CD8-positive, alpha-beta T cell (primary cell): ENCODE measurements at regions of chr6 and their contacts with region 1.

Region 1: GRCh38 chr6:27312146-27312949 is at the start of gene POM121L2:
- DNase-seq: peak; percentile 28 to 79 (median 52)
- ATAC-seq: peak; percentile 65
- H3K4me3 ChIP-seq: peak within 1 kb of the TSS; percentile 71 to 80
- H3K4me3 Mint-ChIP-seq: peak within 1 kb of the TSS; percentile 81
- H3K27ac ChIP-seq: no peak within 1 kb of the TSS
- H3K27ac Mint-ChIP-seq: no peak within 1 kb of the TSS
- H3K4me1 ChIP-seq: peaks cover 12% of the 10 kb centered on the region
- H3K4me1 Mint-ChIP-seq: peaks cover 10% of the 10 kb centered on the region
- H3K27me3 ChIP-seq: peaks cover 10 to 12% of the 10 kb centered on the region in 2 experiments
- H3K27me3 Mint-ChIP-seq: peaks cover 72% of the 10 kb centered on the region
- CTCF ChIP-seq: peak; percentile 79
- total RNA-seq, gene POM121L2: not detected

Region 2: DNA sequence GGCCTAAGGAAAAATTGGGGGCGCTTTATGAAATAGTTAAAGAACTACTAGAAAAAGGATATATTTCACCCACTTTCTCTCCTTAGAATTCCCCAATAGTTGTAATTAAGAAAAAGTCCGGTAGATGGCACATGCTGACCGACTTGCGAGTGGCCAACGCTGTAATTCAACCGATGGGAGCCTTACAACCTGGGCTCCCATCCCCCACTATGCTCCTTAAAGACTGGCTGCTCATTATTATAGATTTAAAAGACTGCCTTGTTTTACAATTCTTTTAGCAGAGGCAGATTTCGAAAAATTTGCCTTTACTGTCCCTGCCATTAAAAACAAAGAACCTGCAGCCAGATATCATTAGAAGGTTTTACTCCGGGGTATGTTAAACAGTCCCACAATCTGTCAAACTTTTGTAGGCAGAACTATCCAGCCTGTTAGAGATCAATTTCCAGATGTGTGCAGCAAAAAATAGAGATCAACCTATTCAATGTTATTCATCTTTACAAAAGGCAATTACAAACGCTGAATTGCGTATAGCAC is 123.4 kb before region 1 on chr6:
- CTCF ChIA-PET with region 1: interaction called, 4 read pairs
- POLR2A ChIA-PET with region 1: no interaction called
- intact Hi-C with region 1: loop called (anchors 2 to 5 kb)
- DNase-seq: peak in 8 of 9 experiments; percentile 24 to 86 (median 50)
- ATAC-seq: peak; percentile 77
- H3K4me3 ChIP-seq: peak overlapping the region; percentile 58 to 62
- H3K4me3 Mint-ChIP-seq: peak overlapping the region; percentile 87
- H3K27ac ChIP-seq: peak overlapping the region in 1 of 2 experiments; percentile 33
- H3K27ac Mint-ChIP-seq: no peak overlapping the region
- H3K4me1 ChIP-seq: peaks cover 4% of the 10 kb centered on the region
- H3K4me1 Mint-ChIP-seq: peaks cover 10% of the 10 kb centered on the region
- H3K27me3 ChIP-seq: no peaks in the 10 kb centered on the region
- H3K27me3 Mint-ChIP-seq: no peaks in the 10 kb centered on the region
- CTCF ChIP-seq: peak; percentile 66

Region 3: DNA sequence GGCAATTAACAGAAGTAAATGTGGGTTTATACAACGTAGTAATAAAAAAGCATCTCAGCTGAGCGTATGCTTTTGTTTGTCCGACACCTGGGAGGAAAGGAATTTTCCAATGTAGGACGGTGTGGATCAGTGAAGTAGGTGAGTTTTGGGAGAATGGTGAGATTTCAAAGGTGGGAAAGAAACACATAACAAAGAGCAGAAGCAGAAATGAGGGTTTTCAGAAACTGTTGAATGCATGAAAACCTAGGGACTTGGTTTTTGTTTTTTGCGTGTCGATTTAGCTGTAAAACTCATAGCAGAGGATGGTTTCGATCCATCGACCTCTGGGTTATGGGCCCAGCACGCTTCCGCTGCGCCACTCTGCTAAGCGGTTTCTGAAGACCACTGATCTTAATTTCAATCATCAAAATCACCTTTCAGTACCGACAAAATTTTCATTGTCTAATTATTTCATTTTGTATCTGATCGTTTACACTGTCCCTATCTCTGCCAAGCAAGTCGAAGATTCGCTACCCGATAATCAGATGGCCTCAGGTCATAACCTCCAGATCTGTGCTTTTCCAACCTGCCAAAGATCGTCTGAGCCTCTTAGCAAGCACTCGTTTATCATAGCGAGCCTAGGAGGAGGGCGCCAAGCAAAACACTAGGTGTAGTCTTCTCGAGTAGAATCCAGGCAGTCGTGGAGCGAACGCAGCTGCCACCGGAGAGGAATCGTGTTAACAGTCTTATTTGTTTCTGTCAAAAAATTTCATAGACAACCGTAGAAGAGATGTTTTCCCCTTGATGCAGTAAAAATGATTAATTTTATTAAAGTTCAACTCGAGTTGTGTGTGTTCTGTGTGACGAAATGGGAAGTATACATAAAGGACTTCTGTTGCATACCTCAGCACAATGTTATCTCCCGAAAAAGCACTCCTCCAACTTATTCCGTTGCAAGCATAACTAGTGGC is 20.6 kb after region 1 on chr6:
- CTCF ChIA-PET with region 1: interaction called, 16 read pairs
- POLR2A ChIA-PET with region 1: no interaction called
- intact Hi-C with region 1: no loop called
- DNase-seq: peak in 8 of 9 experiments; percentile 12 to 78 (median 60)
- ATAC-seq: peak; percentile 86
- H3K4me3 ChIP-seq: peak overlapping the region; percentile 53
- H3K4me3 Mint-ChIP-seq: peak overlapping the region; percentile 87
- H3K27ac ChIP-seq: no peak overlapping the region
- H3K27ac Mint-ChIP-seq: peak overlapping the region; percentile 82
- H3K4me1 ChIP-seq: no peaks in the 10 kb centered on the region
- H3K4me1 Mint-ChIP-seq: peaks cover 15% of the 10 kb centered on the region
- H3K27me3 ChIP-seq: peaks cover 0 to 4% of the 10 kb centered on the region in 2 experiments
- H3K27me3 Mint-ChIP-seq: peaks cover 21% of the 10 kb centered on the region
- CTCF ChIP-seq: no peak

Region 4: DNA sequence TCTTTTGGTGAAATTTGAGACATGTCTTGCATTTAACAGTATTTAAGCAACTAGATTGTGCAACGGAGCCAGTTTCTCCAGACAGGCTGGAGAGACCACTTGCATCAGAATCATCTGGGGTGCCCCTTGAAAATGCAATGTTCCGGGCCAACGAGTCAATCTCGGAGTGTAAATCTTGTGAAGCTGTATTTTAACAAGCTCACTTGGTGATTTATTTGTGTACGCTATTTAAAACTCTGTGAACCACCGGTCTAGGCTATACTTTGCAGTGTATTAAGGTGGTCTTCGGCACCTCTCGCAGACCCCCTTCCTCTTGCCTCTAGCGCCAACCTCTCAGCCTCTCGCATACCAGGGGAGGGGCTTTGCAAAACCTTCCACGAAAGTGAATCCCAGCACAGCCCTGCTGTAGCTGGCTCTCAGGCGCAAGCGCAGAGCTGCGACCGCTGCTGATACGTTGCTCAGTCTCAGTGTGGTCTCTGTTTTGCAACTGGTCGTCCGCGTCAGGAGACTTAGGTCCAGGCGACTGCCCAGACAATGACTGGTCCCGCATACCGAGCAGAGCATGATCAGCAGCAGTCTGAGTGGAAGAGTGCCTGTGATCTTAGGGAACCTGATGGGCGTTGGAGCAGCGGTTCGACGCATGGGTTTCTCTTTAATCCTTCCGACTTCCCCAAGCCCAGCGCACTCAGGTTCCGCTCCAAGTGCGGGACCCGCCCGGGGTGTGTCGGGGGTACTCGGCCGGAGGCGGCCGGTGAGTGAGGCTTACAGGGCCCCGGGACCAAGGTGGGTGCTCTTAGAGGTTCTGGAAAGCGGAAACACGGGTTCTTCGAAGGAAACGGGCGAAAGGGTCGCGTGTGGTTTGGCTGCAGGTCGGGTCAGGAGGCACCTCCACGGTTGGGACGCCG is 76.2 kb after region 1 on chr6 and contains the start of gene ZNF391:
- CTCF ChIA-PET with region 1: no interaction called
- POLR2A ChIA-PET with region 1: no interaction called
- intact Hi-C with region 1: loop called in 1 of 2 experiments (anchors 5 kb)
- DNase-seq: peak; percentile 41 to 86 (median 67)
- ATAC-seq: peak; percentile 90
- H3K4me3 ChIP-seq: peak within 1 kb of the TSS; percentile 66 to 72
- H3K4me3 Mint-ChIP-seq: peak within 1 kb of the TSS; percentile 98
- H3K27ac ChIP-seq: peak within 1 kb of the TSS; percentile 45 to 55
- H3K27ac Mint-ChIP-seq: peak within 1 kb of the TSS; percentile 94
- H3K4me1 ChIP-seq: peaks cover 9% of the 10 kb centered on the region
- H3K4me1 Mint-ChIP-seq: peaks cover 15% of the 10 kb centered on the region
- H3K27me3 ChIP-seq: no peaks in the 10 kb centered on the region
- H3K27me3 Mint-ChIP-seq: no peaks in the 10 kb centered on the region
- CTCF ChIP-seq: no peak
- total RNA-seq, gene ZNF391: 0.72 to 1.1 TPM

Region 5: DNA sequence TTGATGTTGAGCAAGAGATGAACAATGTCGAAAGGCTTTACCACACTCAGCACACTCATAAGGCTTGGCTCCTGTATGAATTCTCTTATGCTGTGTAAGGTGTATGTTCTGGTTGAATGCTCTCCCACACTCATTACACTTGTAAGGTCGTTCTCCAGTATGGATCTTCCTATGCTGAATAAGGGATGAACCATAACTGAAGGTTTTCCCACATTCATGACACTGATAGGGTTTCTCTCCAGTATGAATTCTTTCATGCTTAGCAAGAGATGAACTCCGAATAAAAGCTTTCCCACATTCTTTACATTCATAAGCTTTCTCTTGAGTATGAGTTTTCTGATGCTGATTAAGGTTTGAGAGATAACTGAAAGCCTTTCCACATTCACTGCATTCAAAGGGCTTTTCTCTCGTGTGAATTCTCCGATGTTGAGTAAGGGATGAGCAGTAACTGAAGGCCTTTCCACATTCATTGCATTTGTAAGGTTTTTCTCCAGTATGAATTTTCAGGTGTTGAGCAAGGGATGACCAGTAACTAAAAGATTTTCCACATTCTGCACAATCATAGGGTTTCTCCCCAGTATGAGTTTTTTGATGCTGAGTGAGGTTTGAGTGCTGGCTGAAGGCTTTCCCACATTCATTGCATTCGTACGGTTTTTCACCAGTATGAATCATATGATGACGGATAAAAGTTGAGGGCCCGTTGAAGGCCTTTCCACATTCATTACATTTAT is 139.5 kb after region 1 on chr6:
- CTCF ChIA-PET with region 1: no interaction called
- POLR2A ChIA-PET with region 1: no interaction called
- intact Hi-C with region 1: no loop called
- DNase-seq: no peak
- ATAC-seq: no peak
- H3K4me3 ChIP-seq: no peak overlapping the region
- H3K4me3 Mint-ChIP-seq: no peak overlapping the region
- H3K27ac ChIP-seq: no peak overlapping the region
- H3K27ac Mint-ChIP-seq: no peak overlapping the region
- H3K4me1 ChIP-seq: no peaks in the 10 kb centered on the region
- H3K4me1 Mint-ChIP-seq: no peaks in the 10 kb centered on the region
- H3K27me3 ChIP-seq: no peaks in the 10 kb centered on the region
- H3K27me3 Mint-ChIP-seq: no peaks in the 10 kb centered on the region
- CTCF ChIP-seq: no peak

Region 6: DNA sequence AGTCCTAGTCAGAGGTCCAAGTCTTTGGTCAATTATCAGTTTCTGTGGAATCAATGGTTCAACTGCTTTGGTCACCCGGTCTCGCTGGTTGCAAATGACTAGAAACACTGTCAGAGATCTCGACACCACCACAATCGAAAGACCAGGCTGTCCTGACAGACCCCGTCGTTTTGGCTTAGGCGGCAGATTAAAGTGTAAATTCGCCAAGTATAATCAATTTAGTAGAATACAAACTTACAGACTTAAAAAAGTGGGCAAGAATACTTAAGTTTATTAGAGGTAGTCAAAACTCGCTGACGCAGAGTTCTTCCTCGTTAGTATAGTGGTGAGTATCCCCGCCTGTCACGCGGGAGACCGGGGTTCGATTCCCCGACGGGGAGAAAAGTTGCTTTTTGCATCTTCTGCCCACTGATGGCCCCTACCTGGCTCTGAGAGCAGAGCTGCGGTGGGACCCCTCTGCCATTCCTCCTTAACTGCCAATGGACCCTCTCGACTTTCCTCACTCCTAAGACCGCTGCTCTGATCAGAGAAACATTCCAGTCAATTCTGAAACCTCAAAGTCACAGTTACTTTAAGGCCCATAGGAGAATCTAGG is 191.2 kb after region 1 on chr6:
- CTCF ChIA-PET with region 1: interaction called, 6 read pairs
- POLR2A ChIA-PET with region 1: no interaction called
- intact Hi-C with region 1: loop called in 1 of 2 experiments (anchors 1 kb)
- DNase-seq: peak; percentile 58 to 90 (median 79)
- ATAC-seq: peak; percentile 62
- H3K4me3 ChIP-seq: peak overlapping the region; percentile 61 to 70
- H3K4me3 Mint-ChIP-seq: peak overlapping the region; percentile 94
- H3K27ac ChIP-seq: peak overlapping the region; percentile 34 to 46
- H3K27ac Mint-ChIP-seq: peak overlapping the region; percentile 90
- H3K4me1 ChIP-seq: peaks cover 11% of the 10 kb centered on the region
- H3K4me1 Mint-ChIP-seq: peaks cover 38% of the 10 kb centered on the region
- H3K27me3 ChIP-seq: peaks cover 0 to 7% of the 10 kb centered on the region in 2 experiments
- H3K27me3 Mint-ChIP-seq: peaks cover 4% of the 10 kb centered on the region
- CTCF ChIP-seq: no peak

Region 7: GRCh38 chr6:27608916-27609883 is 296.9 kb after region 1 on chr6:
- CTCF ChIA-PET with region 1: interaction called, 5 read pairs
- POLR2A ChIA-PET with region 1: no interaction called
- intact Hi-C with region 1: loop called (anchors 2 to 5 kb)
- DNase-seq: peak in 2 of 9 experiments; percentile 44 to 58
- ATAC-seq: no peak
- H3K4me3 ChIP-seq: no peak overlapping the region
- H3K4me3 Mint-ChIP-seq: no peak overlapping the region
- H3K27ac ChIP-seq: no peak overlapping the region
- H3K27ac Mint-ChIP-seq: no peak overlapping the region
- H3K4me1 ChIP-seq: no peaks in the 10 kb centered on the region
- H3K4me1 Mint-ChIP-seq: peaks cover 11% of the 10 kb centered on the region
- H3K27me3 ChIP-seq: peaks cover 12 to 18% of the 10 kb centered on the region in 2 experiments
- H3K27me3 Mint-ChIP-seq: peaks cover 47% of the 10 kb centered on the region
- CTCF ChIP-seq: peak; percentile 48